ENCODE measurements at regions of chr16 and their contacts with region 1.

Region 1: DNA sequence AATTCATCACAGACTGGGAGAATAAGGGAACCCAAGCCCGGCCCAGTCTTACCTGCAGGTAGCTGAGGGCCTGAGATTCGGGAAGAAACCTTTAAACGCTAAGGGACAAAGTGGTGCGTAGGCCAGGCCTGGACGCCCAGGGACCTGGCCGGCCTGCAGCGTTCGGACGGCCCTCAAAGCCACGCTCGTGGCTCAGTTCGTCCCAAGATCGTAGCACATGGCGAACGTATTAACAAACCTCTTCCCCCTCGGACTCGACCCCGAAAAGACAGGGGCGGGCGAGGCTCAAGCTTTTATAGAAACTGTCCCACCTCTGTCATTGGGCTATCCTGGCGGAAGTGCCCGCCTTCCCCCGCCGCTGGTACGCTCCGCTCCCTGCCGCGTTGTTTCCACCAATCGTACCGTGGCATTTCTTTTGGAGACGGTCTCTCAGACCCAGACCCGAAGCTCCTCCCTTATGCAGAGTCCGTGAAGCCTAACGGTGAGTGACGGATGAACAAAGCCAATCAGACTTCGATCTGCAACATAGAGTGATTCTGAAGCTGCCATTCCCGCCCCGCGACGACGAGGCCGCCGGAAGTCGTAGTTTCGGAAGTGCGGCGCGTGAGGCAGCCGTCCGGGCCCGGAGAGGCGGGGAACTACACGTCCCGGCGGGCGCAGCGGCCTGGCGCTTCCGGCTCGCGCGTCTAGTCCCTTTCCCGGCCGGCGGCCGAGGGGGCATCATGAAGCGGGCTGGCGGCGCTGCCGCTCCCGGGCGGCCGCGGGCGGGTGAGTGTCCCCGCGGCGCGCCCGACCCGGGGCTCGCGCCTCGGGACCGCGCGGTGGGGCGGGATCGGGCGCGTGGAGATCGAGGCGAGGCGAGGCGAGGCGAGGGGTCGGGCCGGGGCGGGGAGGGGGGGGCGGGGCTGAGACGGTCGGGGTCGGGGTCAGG is at the start of gene TRAF7:
- DNase-seq: peak; percentile 97 to 100 (median 99)
- H3K4me3 ChIP-seq: peak within 1 kb of the TSS; percentile 75 to 79
- H3K4me3 Mint-ChIP-seq: peak within 1 kb of the TSS; percentile 94 to 98 (median 95)
- H3K27ac ChIP-seq: peak within 1 kb of the TSS; percentile 83
- H3K27ac Mint-ChIP-seq: peak within 1 kb of the TSS; percentile 75 to 98 (median 94)
- H3K4me1 ChIP-seq: peaks cover 70% of the 10 kb centered on the region
- H3K4me1 Mint-ChIP-seq: peaks cover 30 to 63% (median 45%) of the 10 kb centered on the region in 4 donors
- H3K27me3 ChIP-seq: no peaks in the 10 kb centered on the region
- H3K27me3 Mint-ChIP-seq: no peaks in the 10 kb centered on the region
- total RNA-seq, gene TRAF7: 40.9 to 41.9 TPM

Region 2: GRCh38 chr16:1863681-1864460 is 291.5 kb before region 1 on chr16:
- CTCF ChIA-PET with region 1: no interaction called
- POLR2A ChIA-PET with region 1: no interaction called
- intact Hi-C with region 1: loop called (anchors 10 kb)
- DNase-seq: peak in 4 of 5 donors; percentile 28 to 41 (median 34)
- H3K4me3 ChIP-seq: no peak overlapping the region
- H3K4me3 Mint-ChIP-seq: no peak overlapping the region
- H3K27ac ChIP-seq: no peak overlapping the region
- H3K27ac Mint-ChIP-seq: peak overlapping the region in 1 of 7 donors; percentile 47
- H3K4me1 ChIP-seq: no peaks in the 10 kb centered on the region
- H3K4me1 Mint-ChIP-seq: no peaks in the 10 kb centered on the region
- H3K27me3 ChIP-seq: no peaks in the 10 kb centered on the region
- H3K27me3 Mint-ChIP-seq: peaks cover 9 to 27% of the 10 kb centered on the region in 2 donors

Region 3: DNA sequence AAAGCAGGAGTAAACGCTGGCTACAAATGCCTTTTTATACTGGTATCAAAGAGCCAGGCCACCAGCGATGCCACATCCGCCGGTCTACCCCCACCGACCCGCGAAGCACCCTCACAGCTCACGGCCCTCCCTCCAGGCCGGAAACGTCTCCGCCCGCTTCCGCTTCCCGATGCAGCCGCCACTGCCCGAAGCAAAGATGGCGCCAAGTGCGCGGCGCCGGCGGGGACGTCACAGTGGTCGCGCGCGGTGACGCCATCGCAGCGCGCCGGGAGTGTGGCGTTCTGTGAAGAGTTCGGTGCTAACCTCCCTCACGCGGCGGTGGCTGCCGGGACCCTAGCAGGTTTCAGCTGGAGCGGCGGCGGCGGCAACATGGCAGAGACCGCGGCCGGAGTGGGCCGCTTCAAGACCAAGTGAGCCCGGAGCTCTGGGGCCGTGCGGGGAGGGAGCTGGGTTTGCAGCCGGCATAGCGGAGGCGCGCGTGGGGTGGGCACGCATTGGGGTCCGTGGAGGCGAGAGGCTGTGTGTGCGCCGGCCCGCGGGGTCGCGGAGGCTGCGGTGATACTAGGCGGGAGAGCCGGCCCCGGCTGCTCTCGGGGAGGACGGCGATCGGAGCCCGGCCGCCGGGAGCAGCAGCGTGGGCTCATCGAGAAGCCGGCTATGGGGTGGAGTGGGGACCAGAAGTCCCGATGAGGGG is 183.4 kb before region 1 on chr16 and contains the start of gene TBL3:
- CTCF ChIA-PET with region 1: no interaction called
- POLR2A ChIA-PET with region 1: interaction called, 75 read pairs
- intact Hi-C with region 1: no loop called
- DNase-seq: peak; percentile 97 to 98 (median 97)
- H3K4me3 ChIP-seq: peak within 1 kb of the TSS; percentile 55 to 73
- H3K4me3 Mint-ChIP-seq: peak within 1 kb of the TSS; percentile 94 to 99 (median 96)
- H3K27ac ChIP-seq: peak within 1 kb of the TSS; percentile 70
- H3K27ac Mint-ChIP-seq: peak within 1 kb of the TSS; percentile 89 to 99 (median 97)
- H3K4me1 ChIP-seq: peaks cover 27% of the 10 kb centered on the region
- H3K4me1 Mint-ChIP-seq: peaks cover 8 to 22% (median 16%) of the 10 kb centered on the region in 4 donors
- H3K27me3 ChIP-seq: no peaks in the 10 kb centered on the region
- H3K27me3 Mint-ChIP-seq: peaks cover 0 to 5% of the 10 kb centered on the region in 2 donors
- total RNA-seq, gene TBL3: 33.2 to 35.0 TPM

Region 4: GRCh38 chr16:2009789-2010510 is 145.4 kb before region 1 on chr16 and contains the start of gene ZNF598:
- CTCF ChIA-PET with region 1: interaction called, 14 read pairs
- POLR2A ChIA-PET with region 1: interaction called, 18 read pairs
- intact Hi-C with region 1: no loop called
- DNase-seq: peak; percentile 76 to 82 (median 80)
- H3K4me3 ChIP-seq: peak within 1 kb of the TSS; percentile 62 to 91
- H3K4me3 Mint-ChIP-seq: peak within 1 kb of the TSS; percentile 88 to 95 (median 92)
- H3K27ac ChIP-seq: peak within 1 kb of the TSS; percentile 93
- H3K27ac Mint-ChIP-seq: peak within 1 kb of the TSS; percentile 92 to 98 (median 98)
- H3K4me1 ChIP-seq: peaks cover 39% of the 10 kb centered on the region
- H3K4me1 Mint-ChIP-seq: peaks cover 23 to 44% (median 33%) of the 10 kb centered on the region in 4 donors
- H3K27me3 ChIP-seq: no peaks in the 10 kb centered on the region
- H3K27me3 Mint-ChIP-seq: no peaks in the 10 kb centered on the region
- total RNA-seq, gene ZNF598: 48.5 to 49.8 TPM

Region 5: DNA sequence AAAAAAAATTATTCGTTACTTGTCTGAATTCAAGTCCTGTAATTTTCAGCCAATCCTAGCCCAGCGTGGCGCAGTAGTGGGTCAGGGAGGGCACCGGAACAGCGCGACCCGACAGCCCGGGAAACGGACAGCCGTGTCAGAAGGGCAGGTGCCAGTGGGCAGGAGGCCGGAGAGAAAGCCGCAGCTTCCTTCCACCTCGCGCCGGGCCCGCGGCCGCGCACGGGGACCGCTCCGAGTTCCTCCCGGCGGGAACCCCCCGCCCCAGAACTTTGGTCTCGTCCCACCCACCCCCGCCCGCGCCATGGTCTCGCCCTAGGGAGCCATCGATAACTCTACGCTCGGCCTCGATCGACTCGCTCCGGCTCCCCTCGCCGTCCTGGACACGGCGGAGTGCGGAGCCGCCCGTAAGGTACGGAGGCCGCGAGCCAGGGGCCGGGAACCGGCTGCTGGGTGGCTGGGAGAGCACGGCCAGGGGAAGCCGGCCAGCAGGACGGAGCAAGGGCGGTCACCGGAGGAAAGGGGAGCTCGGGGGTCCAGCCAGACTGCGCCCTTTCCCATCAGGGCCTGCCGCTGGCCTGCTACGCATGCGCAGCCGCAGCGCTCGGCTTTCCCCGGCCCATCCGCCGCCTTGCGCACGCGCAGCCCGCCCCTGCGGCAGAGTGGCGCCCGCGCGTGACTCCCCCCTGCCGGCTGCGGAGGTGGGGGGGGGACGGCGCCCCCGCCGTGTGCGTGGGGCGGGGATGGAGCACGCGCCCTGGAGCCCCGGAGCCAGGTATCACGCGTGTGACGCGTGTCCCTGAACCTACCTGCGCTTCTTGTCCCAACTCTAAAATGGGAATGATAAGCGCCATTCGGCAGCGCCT is 50.0 kb after region 1 on chr16 and contains the start of gene MLST8:
- CTCF ChIA-PET with region 1: no interaction called
- POLR2A ChIA-PET with region 1: interaction called, 26 read pairs
- intact Hi-C with region 1: loop called (anchors 1 kb)
- DNase-seq: peak; percentile 87 to 99 (median 97)
- H3K4me3 ChIP-seq: peak within 1 kb of the TSS; percentile 88 to 89
- H3K4me3 Mint-ChIP-seq: peak within 1 kb of the TSS; percentile 79 to 88 (median 84)
- H3K27ac ChIP-seq: peak within 1 kb of the TSS; percentile 90
- H3K27ac Mint-ChIP-seq: peak within 1 kb of the TSS; percentile 69 to 95 (median 89)
- H3K4me1 ChIP-seq: peaks cover 26% of the 10 kb centered on the region
- H3K4me1 Mint-ChIP-seq: peaks cover 12 to 29% (median 18%) of the 10 kb centered on the region in 4 donors
- H3K27me3 ChIP-seq: no peaks in the 10 kb centered on the region
- H3K27me3 Mint-ChIP-seq: peaks cover 0 to under 1% of the 10 kb centered on the region in 2 donors
- total RNA-seq, gene MLST8: 28.1 to 31.1 TPM

Region 6: DNA sequence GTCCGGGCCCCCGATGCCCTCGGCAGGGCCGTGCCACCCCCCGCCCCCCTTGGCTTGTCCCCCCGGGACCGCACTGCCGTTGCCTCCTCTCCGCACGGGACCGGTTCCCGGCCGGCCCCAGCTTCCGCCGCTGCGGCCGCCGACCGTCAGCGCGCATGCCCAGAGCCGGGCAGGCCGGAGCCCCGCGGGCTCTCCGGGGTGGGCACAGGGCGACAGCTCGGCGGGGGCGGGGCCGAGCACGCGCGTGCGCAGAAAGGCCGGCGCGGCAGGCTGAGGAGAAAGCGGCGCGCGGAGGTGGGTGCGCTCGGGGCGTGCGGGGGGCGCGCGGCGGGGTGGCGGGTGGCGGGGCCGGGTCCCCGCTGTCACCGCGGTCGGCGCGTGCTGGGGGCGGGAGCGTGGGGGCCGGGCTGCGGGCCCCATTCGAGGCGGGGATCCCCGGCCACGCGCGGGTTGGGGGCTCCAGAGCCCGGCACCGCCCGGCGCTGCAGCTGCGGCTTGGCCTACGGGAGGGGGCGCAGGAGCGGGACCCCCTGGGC is 319.6 kb after region 1 on chr16 and contains the start of gene TBC1D24:
- CTCF ChIA-PET with region 1: no interaction called
- POLR2A ChIA-PET with region 1: interaction called, 4 read pairs
- intact Hi-C with region 1: loop called (anchors 1 kb)
- DNase-seq: peak; percentile 66 to 73 (median 66)
- H3K4me3 ChIP-seq: peak within 1 kb of the TSS in 1 of 2 donors; percentile 66
- H3K4me3 Mint-ChIP-seq: peak within 1 kb of the TSS; percentile 63 to 81 (median 76)
- H3K27ac ChIP-seq: peak within 1 kb of the TSS; percentile 12
- H3K27ac Mint-ChIP-seq: peak within 1 kb of the TSS in 3 of 7 donors; percentile 42 to 78 (median 62)
- H3K4me1 ChIP-seq: peaks cover 34% of the 10 kb centered on the region
- H3K4me1 Mint-ChIP-seq: peaks cover 6 to 28% (median 14%) of the 10 kb centered on the region in 4 donors
- H3K27me3 ChIP-seq: peaks cover 20% of the 10 kb centered on the region
- H3K27me3 Mint-ChIP-seq: peaks cover 7 to 11% of the 10 kb centered on the region in 2 donors
- total RNA-seq, gene TBC1D24: 9.6 to 13.7 TPM

Region 7: DNA sequence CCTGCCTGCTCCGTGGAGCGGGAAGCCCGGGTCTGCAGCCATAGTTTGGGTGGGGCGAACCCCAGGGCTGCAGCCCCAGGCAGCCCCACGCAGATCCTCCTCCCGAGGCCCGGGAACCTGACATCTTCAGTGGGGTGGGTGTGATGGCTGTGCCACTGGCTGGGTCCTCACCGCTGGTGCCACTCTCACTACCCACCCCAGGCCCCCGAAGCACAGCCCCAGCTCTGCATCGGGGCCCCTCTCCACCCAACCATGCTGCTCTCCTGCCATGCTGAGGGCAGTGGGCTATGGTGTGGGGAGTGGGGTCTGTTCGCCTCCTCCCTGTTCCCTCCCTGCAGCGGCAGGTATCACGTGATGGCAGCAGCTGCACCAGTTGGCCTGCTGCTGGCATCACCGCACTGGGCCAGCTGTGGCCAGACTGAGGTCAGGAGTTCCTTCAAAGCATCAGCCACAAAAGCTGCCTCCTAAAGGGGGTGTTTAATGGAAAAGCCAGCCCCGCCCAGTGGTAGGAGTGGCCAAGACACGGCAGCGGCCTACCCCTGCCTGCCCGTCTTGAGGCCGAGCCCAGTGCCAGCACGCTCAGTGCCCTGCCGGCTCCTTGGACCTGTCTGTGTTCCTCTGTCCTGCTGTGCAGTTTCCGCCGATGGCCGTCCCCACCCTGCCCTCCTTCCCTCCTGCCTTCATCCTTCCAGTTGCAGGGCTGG is 537.7 kb after region 1 on chr16:
- CTCF ChIA-PET with region 1: no interaction called
- POLR2A ChIA-PET with region 1: no interaction called
- intact Hi-C with region 1: no loop called
- DNase-seq: no peak
- H3K4me3 ChIP-seq: no peak overlapping the region
- H3K4me3 Mint-ChIP-seq: no peak overlapping the region
- H3K27ac ChIP-seq: no peak overlapping the region
- H3K27ac Mint-ChIP-seq: no peak overlapping the region
- H3K4me1 ChIP-seq: no peaks in the 10 kb centered on the region
- H3K4me1 Mint-ChIP-seq: peaks cover 0 to 9% (median 2%) of the 10 kb centered on the region in 4 donors
- H3K27me3 ChIP-seq: no peaks in the 10 kb centered on the region
- H3K27me3 Mint-ChIP-seq: no peaks in the 10 kb centered on the region